ENCODE measurements at regions of chr17 and their contacts with region 1.

Region 1: DNA sequence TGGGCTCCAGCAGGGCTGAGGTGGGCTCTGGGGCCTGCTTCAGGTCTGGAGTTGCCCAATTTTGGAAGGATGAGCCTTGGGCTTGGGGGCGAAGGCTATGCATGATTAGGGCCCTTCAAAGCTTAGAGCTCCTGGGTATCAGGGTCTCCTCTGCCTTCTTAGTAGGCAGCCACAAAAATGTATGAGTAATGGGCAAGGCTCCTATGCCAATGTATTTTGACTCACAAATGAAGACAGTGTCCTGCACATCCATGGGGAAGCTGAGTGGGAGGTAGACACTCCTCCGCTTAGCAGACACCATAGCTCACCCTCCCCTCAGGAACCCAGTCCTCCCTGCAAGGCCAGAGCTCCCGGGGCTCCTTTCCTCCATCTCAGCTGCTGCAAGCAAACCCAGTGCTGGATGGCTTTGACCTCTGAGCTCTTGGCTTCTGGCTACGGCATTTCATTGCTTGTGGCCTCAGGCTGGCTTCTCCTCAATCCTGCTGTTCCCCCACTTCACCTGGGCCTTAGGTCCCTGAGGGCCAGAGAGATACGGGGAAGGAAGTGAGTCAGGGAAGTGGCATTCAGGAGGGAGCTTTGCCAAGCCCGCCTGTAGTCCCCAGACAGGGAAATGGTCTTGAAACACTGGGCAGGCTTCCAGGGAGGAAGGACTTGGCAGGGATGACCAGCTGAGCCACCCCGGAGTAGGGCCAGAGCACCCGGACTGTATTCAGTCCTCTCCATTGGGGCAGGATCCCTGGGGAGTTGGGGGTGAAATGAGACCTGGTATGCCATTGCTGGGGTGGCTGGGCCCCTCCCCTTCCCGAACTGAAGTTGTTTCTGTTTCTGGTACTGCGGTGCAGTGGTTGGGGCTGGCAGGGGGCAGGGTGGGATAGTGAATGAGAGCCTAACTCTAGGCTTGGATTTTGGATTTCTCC is 4.4 kb downstream of the ABCC3 start:
- DNase-seq: peak; percentile 13 to 83
- H3K4me3 ChIP-seq: no peak overlapping the region
- H3K4me3 Mint-ChIP-seq: no peak overlapping the region
- H3K27ac Mint-ChIP-seq: peak overlapping the region; percentile 1
- H3K4me1 ChIP-seq: peaks cover 69% of the 10 kb centered on the region
- H3K4me1 Mint-ChIP-seq: peaks cover 31% of the 10 kb centered on the region
- H3K27me3 ChIP-seq: no peaks in the 10 kb centered on the region
- H3K27me3 Mint-ChIP-seq: no peaks in the 10 kb centered on the region
- CTCF ChIP-seq: no peak

Region 2: DNA sequence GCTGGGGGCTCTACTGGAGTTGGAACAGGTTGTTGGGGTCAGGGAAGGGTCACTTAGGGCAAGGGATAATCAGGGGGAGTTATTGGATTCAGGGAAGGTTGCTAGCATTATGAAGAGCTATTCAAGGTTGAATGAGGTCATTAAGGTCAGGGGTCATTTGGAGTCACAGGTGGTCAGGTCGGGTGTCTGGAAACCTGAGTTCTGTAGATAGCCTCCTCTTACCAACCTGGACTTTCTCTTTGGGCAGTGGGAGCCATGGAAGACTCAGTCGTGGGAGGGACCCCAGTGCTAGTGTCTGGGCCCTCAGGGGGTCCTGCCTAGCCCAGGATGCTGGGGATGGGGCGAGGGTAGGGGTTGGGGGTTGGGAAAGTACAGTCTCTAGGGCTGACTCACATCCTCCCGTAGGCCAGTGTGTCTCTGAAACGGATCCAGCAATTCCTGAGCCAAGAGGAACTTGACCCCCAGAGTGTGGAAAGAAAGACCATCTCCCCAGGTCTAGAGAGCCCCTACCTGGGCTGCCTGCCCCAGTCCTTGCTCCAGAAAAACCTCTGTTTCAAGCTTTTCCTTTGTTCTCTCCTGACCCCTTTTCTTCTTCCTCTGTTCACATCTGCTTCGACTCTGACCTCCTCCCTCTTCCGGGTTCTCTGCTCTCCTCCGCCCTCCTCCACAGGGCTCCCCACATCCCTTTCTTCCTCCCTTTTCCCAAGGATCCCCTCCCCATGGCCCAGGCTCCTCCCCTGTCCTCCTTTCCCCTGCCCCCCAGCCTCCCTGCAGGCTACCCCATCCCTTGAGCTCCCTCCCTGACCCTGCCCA is 29.1 kb after region 1 on chr17:
- CTCF ChIA-PET with region 1: no interaction called
- POLR2A ChIA-PET with region 1: interaction called, 5 read pairs
- intact Hi-C with region 1: loop called (anchors 2 kb)
- DNase-seq: peak in 1 of 2 experiments; percentile 49
- H3K4me3 ChIP-seq: no peak overlapping the region
- H3K4me3 Mint-ChIP-seq: no peak overlapping the region
- H3K27ac Mint-ChIP-seq: peak overlapping the region; percentile 3
- H3K4me1 ChIP-seq: peaks cover 32% of the 10 kb centered on the region
- H3K4me1 Mint-ChIP-seq: peaks cover 44% of the 10 kb centered on the region
- H3K27me3 ChIP-seq: no peaks in the 10 kb centered on the region
- H3K27me3 Mint-ChIP-seq: no peaks in the 10 kb centered on the region
- CTCF ChIP-seq: no peak

Region 3: DNA sequence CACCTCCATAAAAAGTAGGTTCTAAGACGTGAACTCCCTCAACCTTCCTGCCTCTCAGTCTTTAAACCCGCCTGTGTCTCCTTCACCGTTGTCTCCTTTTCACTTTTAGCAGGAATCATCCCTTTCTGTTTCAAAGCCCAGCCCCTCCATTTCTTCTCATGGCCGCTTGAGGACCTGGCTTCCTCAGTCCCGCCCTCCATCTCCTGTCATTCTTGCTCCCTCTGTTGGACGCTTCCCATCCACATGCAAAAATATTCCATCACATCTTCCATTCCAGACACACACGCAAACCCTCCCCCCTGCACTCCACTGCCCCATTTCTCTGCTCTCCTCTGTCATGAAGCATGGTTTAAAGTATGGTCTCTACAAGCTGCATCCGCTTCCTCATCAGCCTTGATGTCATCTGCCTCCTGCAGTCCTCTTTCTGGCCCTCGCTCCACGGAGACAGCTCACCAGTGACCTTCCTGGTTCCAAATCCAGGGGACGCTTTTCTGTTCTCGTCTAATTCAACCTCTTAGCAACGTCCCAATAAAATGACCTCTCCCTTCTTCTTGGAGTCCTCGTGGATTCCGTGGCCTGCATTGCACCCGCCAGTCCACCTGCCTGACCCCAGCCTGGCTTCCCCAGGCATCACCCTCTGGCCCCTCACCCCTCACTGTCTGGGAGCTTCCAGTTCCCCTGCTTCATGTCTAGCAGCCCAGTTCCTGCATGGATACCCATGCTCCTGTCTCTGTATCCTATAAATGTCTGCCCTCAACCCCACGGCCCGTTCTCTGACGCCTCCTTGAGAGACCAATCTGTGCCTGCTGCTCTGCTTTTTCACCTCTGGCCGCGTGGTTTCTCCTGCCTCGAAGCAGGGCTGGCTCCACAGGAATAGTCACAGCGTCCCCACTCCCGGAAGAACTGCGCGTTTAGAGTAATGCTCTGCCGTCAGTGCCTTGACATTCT is 42.4 kb after region 1 on chr17:
- CTCF ChIA-PET with region 1: interaction called, 7 read pairs
- POLR2A ChIA-PET with region 1: interaction called, 3 read pairs
- intact Hi-C with region 1: loop called (anchors 1 kb)
- DNase-seq: peak; percentile 88 to 89
- H3K4me3 ChIP-seq: no peak overlapping the region
- H3K4me3 Mint-ChIP-seq: peak overlapping the region; percentile 14
- H3K27ac Mint-ChIP-seq: peak overlapping the region; percentile 66
- H3K4me1 ChIP-seq: peaks cover 73% of the 10 kb centered on the region
- H3K4me1 Mint-ChIP-seq: peaks cover 58% of the 10 kb centered on the region
- H3K27me3 ChIP-seq: no peaks in the 10 kb centered on the region
- H3K27me3 Mint-ChIP-seq: no peaks in the 10 kb centered on the region
- CTCF ChIP-seq: peak; percentile 94